Adrenal gland (tissue), 19 donors: ENCODE measurements at regions of chr4 and their contacts with region 1.

Region 1: GRCh38 chr4:10554694-10555093 is 97.5 kb upstream of the ZNF518B start:
- DNase-seq: peak; percentile 45 to 84 (median 65)
- H3K4me3 ChIP-seq: no peak overlapping the region
- H3K27ac ChIP-seq: peak overlapping the region in 1 of 5 donors; percentile 18
- H3K4me1 ChIP-seq: peaks cover 0 to 9% of the 10 kb centered on the region in 2 donors
- H3K27me3 ChIP-seq: no peaks in the 10 kb centered on the region
- CTCF ChIP-seq: peak; percentile 73 to 87 (median 82)
- POLR2A ChIP-seq: no peak

Region 2: GRCh38 chr4:10164877-10165283 is 389.8 kb before region 1 on chr4:
- intact Hi-C with region 1: loop called in 1 of 2 experiments (anchors 5 kb)
- DNase-seq: peak in 6 of 7 donors; percentile 38 to 69 (median 58)
- H3K4me3 ChIP-seq: no peak overlapping the region
- H3K27ac ChIP-seq: no peak overlapping the region
- H3K4me1 ChIP-seq: no peaks in the 10 kb centered on the region
- H3K27me3 ChIP-seq: no peaks in the 10 kb centered on the region
- CTCF ChIP-seq: peak; percentile 32 to 70 (median 66)
- POLR2A ChIP-seq: no peak

Region 3: DNA sequence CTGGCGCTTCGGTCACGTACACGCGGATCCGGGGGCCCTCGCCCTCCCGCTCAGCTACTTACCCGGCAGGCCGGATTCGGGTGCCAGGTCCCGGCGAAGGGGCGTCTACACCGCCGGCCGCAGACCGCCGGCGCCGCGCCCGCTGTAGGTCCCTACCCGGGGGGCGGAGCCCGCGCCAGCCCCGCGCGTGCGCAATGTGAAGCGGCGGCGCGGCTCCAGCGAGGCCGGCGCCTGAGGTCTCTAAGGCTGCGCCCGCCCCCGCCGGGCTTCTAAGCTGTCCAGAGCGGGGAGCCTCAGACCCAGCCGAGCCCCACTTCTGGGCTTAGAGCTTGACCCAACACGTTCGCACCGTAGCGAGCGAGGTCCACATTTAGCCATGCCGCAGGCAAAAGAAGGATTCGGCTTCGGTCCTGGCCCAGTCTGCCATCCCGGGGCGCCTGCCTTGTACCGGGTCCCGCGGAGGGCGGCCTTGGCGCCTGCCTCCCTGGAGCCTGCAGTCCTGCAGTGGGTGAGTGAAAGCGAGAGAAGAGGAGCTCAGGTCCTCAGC is 97.4 kb before region 1 on chr4 and contains the start of gene ZNF518B:
- intact Hi-C with region 1: loop called in 1 of 2 experiments (anchors 10 kb)
- DNase-seq: peak; percentile 46 to 74 (median 62)
- H3K4me3 ChIP-seq: peak within 1 kb of the TSS in 3 of 4 donors; percentile 30 to 89 (median 40)
- H3K27ac ChIP-seq: peak within 1 kb of the TSS in 3 of 5 donors; percentile 11 to 81 (median 52)
- H3K4me1 ChIP-seq: peaks cover 5 to 6% of the 10 kb centered on the region in 2 donors
- H3K27me3 ChIP-seq: no peaks in the 10 kb centered on the region
- CTCF ChIP-seq: no peak
- POLR2A ChIP-seq: peak in 1 of 2 donors; percentile 37
- total RNA-seq, gene ZNF518B: 15.0 to 45.1 (median 23.2) TPM